ENCODE measurements at regions of chr12 and their contacts with region 1.

Region 1: DNA sequence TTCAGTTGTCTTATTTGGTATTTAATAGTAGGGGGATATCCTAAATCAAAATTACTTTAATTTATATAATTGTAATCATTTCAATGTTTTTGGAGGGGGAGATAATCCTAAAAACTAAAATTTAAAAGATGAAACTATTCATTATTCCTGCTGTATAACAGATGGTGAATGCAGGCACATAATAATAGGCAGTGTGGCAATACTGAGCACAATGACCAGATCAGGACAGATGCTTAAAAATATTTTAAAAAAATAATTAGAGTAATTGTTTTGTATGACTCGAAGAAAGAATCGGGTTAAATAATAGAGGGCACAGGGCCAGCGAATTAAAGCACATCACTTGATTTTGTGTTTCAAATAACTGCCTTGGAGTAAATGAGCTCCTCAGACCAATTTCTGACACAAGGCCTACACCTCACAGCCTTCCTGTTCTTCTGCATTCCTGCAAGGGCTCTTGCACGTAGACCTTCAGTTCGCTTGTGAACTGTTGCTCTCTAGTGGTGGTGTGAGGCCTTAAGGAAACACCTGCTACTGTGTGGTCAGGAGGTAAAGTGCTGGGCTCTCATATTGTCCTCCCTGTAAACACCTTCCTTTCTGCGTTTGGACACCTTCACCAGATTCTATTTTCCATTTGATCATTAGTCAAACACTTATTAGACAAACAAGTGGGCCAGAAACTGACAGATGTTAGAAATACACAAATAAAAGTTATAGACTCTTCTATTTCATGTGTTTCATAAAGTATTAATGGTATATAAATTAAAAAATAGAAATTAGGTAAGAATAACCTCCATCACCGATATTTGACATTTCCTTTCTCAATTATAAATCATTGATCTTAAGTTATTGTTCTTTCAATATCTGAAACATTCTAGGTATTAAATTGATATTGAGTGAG is 29.3 kb upstream of the KLRF1 start:
- DNase-seq: peak; percentile 66
- H3K4me3 Mint-ChIP-seq: no peak overlapping the region
- H3K27ac Mint-ChIP-seq: peak overlapping the region; percentile 11
- H3K4me1 Mint-ChIP-seq: peaks cover 46% of the 10 kb centered on the region
- H3K27me3 Mint-ChIP-seq: peaks cover 3% of the 10 kb centered on the region

Region 2: GRCh38 chr12:9244894-9245293 is 553.1 kb before region 1 on chr12:
- intact Hi-C with region 1: loop called (anchors 10 kb)
- DNase-seq: peak; percentile 13
- H3K4me3 Mint-ChIP-seq: no peak overlapping the region
- H3K27ac Mint-ChIP-seq: peak overlapping the region; percentile 95
- H3K4me1 Mint-ChIP-seq: peaks cover 39% of the 10 kb centered on the region
- H3K27me3 Mint-ChIP-seq: peaks cover 11% of the 10 kb centered on the region

Region 3: DNA sequence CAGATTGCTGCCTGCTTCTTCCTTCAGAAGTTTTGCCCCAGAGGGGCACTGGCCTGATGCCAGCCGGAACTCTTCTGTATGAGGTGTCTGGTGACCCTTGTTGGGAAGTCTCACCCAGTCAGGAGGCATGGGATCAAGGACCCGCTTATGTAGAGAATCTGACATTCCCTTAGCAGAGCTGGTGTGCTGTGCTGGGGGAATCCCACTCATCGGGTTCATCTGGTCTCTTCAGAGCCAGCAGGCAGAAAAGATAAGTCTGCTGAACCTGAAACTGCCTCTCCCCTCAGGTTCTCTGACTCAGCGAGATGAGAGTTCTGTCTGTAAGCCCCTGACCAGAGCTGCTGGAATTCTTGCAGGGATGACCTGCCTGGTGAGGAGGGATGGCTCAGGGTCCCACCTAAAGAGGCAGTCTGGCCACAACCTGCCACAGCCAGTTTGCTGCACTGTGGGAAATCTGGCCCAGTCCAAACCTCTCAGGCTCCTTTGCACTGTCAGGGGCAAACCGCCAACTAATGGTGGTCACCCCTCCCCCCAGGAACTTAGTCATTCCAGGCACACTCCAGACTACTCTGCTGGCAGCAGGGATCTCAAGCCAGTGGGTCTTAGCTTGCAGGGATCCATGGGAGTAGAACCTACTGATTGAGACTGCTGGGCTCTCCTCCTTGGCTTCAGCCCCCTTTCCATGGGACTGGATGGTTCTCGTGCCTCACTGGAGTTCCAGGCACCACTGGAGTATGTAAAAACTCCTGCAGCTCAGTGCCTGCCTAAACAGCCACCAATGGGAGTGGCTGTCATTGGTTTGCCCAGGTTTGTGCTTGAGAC is 124.4 kb before region 1 on chr12:
- intact Hi-C with region 1: loop called (anchors 1 kb)
- DNase-seq: peak; percentile 48
- H3K4me3 Mint-ChIP-seq: peak overlapping the region; percentile 93
- H3K27ac Mint-ChIP-seq: peak overlapping the region; percentile 97
- H3K4me1 Mint-ChIP-seq: peaks cover 58% of the 10 kb centered on the region
- H3K27me3 Mint-ChIP-seq: no peaks in the 10 kb centered on the region

Region 4: GRCh38 chr12:9750276-9751203 is 47.4 kb before region 1 on chr12:
- intact Hi-C with region 1: loop called (anchors 1 kb)
- DNase-seq: peak; percentile 46
- H3K4me3 Mint-ChIP-seq: no peak overlapping the region
- H3K27ac Mint-ChIP-seq: peak overlapping the region; percentile 44
- H3K4me1 Mint-ChIP-seq: peaks cover 48% of the 10 kb centered on the region
- H3K27me3 Mint-ChIP-seq: peaks cover 1% of the 10 kb centered on the region

Region 5: DNA sequence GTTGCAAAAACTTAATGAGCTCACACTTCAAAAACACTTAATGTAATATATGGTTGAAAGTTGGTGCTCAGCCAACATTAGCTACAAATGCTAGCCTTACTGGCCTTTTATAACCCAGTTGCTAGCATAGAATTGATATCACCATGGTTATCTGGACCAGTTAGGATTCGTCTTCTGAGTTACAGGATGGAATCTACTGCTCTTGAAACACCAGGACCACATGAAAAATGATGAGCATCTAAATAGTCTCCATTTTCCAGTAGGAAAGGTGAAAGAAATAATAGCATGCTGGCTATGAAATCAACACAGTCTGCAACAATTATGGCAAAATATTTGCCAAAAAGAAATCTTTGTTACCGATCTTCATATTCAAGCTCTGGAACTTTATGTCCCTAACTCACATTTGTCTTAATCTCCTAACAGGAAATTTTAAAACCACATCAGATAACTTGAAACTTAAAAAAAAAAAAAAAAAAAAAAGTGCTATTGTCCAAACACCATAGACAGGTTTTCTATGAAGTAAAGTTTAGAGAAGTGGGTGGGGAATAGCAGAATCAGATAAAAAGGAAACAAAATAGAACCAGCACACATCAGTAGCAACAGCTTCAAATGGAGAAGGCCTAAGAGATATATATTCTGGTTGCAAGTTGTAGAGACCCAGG is 24.6 kb before region 1 on chr12:
- intact Hi-C with region 1: loop called (anchors 1 kb)
- DNase-seq: no peak
- H3K4me3 Mint-ChIP-seq: no peak overlapping the region
- H3K27ac Mint-ChIP-seq: peak overlapping the region; percentile 51
- H3K4me1 Mint-ChIP-seq: peaks cover 75% of the 10 kb centered on the region
- H3K27me3 Mint-ChIP-seq: no peaks in the 10 kb centered on the region

Region 6: DNA sequence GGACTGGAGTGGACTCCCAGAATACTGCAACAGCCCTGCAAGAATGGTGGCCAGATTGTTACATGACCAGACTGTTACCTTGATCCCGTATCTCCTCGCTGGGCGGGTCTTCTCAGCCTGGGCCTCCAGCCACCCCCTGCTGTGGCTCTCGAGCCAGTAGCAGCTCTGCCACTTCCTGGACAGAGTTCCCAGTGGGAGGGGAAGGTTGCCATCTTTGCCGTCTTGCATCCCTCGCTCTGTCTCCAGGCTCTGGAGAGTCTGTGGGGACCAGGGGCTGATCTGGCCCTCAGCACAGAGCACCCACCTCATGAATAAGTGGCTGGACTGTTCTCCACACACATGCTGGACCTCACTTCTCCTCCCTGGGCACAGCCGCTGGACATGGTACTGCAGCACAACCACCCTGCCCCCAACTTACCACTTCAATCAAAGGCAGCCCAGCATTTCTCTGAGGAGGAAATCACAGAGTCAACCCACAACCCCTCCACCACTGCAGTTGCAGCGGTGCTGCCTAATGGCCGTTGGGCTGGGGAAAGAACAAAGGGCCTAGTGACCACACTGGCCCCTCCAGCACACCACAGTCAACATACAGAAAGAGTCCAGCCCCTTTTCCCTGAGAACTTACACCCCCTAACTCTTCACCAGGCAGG is 22.4 kb after region 1 on chr12:
- intact Hi-C with region 1: no loop called
- DNase-seq: no peak
- H3K4me3 Mint-ChIP-seq: no peak overlapping the region
- H3K27ac Mint-ChIP-seq: no peak overlapping the region
- H3K4me1 Mint-ChIP-seq: peaks cover 1% of the 10 kb centered on the region
- H3K27me3 Mint-ChIP-seq: peaks cover 49% of the 10 kb centered on the region

Region 7: DNA sequence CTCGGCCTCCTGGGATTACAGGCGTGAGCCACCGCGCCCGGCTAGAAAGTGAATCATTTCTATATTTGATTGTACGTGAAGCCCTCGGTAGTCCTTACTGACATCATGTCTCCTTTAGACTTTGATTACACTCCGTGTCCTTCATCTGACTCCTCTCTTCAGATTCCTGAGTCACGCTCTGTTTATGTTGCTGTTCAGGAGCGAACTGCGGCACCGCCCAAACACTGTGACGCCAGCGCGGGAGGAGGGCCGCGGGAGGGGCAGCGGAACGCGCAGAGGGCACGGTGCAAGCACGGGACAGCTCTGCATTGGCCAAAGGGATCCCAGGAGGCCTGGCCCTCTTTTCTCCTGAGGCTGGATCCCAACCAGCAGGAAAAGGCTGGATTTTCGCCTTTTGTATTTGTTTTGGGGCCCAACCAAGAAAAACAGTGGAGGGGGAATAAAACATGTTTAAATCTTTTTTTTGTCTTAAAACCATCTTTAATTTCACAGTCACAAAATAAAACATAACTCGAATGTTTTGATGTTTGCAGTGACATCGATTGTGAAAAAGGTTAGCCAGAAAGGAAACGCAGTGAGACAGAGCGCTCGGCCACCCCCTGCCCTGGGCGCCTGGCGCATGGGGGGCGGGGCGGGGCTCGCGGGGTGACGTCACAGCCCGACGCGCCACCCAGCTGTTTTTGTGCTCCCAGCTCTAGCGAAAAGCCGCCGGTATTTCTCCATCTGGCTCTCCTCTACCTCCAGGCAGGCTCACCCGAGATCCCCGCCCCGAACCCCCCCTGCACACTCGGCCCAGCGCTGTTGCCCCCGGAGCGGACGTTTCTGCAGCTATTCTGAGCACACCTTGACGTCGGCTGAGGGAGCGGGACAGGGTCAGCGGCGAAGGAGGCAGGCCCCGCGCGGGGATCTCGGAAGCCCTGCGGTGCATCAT is 414.5 kb after region 1 on chr12 and contains the start of gene GABARAPL1:
- intact Hi-C with region 1: loop called (anchors 5 kb)
- DNase-seq: peak; percentile 81
- H3K4me3 Mint-ChIP-seq: peak within 1 kb of the TSS; percentile 91
- H3K27ac Mint-ChIP-seq: peak within 1 kb of the TSS; percentile 93
- H3K4me1 Mint-ChIP-seq: peaks cover 30% of the 10 kb centered on the region
- H3K27me3 Mint-ChIP-seq: peaks cover 21% of the 10 kb centered on the region
- total RNA-seq, gene GABARAPL1: 4.0 and 5.2 TPM in 2 replicates

Measured in activated T-helper 2 cell treated with anti-CD3 and anti-CD28 coated beads, Interferon-gamma antibody, Interleukin-2, Interleukin-4, amounts not matched to agents 10 μg/mL and 5 μg/mL and 100 μg/mL, durations not matched to agents 14 hours and 24 hours and 36 hours (primary cell).